ENCODE measurements at regions of chr19 and their contacts with region 1.

Region 1: GRCh38 chr19:41263850-41264580 is at the start of gene HNRNPUL1:
- DNase-seq: peak; percentile 99
- ATAC-seq: peak; percentile 70
- H3K4me3 Mint-ChIP-seq: peak within 1 kb of the TSS; percentile 95
- H3K27ac Mint-ChIP-seq: peak within 1 kb of the TSS; percentile 100
- H3K4me1 Mint-ChIP-seq: peaks cover 34% of the 10 kb centered on the region
- H3K27me3 Mint-ChIP-seq: no peaks in the 10 kb centered on the region
- total RNA-seq, gene HNRNPUL1: 263 to 312 TPM

Region 2: GRCh38 chr19:40444192-40445028 is 819.6 kb before region 1 on chr19 and contains the start of gene SERTAD3:
- CTCF ChIA-PET with region 1: no interaction called
- POLR2A ChIA-PET with region 1: no interaction called
- intact Hi-C with region 1: loop called in 1 of 2 experiments (anchors 5 kb)
- DNase-seq: peak; percentile 98
- ATAC-seq: peak; percentile 70
- H3K4me3 Mint-ChIP-seq: peak within 1 kb of the TSS; percentile 96
- H3K27ac Mint-ChIP-seq: peak within 1 kb of the TSS; percentile 96
- H3K4me1 Mint-ChIP-seq: peaks cover 16% of the 10 kb centered on the region
- H3K27me3 Mint-ChIP-seq: no peaks in the 10 kb centered on the region
- total RNA-seq, gene SERTAD3: 8.4 to 12.0 TPM

Region 3: GRCh38 chr19:40777937-40778705 is 485.9 kb before region 1 on chr19 and contains the start of gene RAB4B:
- CTCF ChIA-PET with region 1: interaction called, 9 read pairs
- POLR2A ChIA-PET with region 1: interaction called, 11 read pairs
- intact Hi-C with region 1: loop called in 1 of 2 experiments (anchors 1 kb)
- DNase-seq: peak; percentile 100
- ATAC-seq: peak; percentile 79
- H3K4me3 Mint-ChIP-seq: peak within 1 kb of the TSS; percentile 84
- H3K27ac Mint-ChIP-seq: peak within 1 kb of the TSS; percentile 94
- H3K4me1 Mint-ChIP-seq: peaks cover 38% of the 10 kb centered on the region
- H3K27me3 Mint-ChIP-seq: no peaks in the 10 kb centered on the region
- total RNA-seq, gene RAB4B: 26.4 to 33.7 TPM

Region 4: DNA sequence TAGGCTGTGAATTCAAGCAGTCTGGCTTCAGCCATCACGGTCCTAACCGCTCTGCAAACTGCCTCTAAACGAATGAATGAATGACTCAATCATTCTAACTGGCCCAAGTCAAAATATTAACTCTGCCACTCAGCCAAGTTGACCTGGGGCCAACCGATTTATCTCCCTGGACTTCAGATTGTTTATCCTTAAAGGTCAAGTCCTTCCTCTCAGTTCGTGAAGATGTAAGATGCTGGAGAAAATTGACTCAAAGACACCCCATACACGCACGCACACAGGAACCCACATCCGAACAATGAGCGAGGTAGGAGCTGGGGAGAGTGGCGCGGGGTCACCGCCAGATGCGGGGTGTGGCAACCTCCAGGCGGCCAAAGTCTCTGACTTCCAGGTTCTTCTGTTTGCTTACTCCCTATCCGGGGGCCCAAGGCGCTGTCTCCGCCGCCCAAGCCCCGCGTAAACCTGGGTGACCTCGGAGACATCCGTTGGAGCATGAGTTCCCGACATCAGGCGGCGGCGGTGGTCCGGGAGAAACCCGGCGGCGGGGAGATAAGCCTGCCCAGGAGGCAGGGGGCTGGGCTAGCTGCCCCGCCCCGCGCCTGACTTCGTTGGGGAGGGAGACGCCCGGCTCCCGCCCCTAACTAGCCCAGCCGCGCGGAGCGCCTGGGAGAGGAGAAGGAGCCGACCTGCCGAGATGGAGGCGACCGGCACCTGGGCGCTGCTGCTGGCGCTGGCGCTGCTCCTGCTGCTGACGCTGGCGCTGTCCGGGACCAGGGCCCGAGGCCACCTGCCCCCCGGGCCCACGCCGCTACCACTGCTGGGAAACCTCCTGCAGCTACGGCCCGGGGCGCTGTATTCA is 71.2 kb before region 1 on chr19 and contains the start of gene CYP2S1:
- CTCF ChIA-PET with region 1: no interaction called
- POLR2A ChIA-PET with region 1: no interaction called
- intact Hi-C with region 1: no loop called
- DNase-seq: peak; percentile 46
- ATAC-seq: peak; percentile 71
- H3K4me3 Mint-ChIP-seq: peak within 1 kb of the TSS; percentile 41
- H3K27ac Mint-ChIP-seq: peak within 1 kb of the TSS; percentile 29
- H3K4me1 Mint-ChIP-seq: peaks cover 12% of the 10 kb centered on the region
- H3K27me3 Mint-ChIP-seq: peaks cover 34% of the 10 kb centered on the region
- total RNA-seq, gene CYP2S1: 0.46 to 0.84 TPM

Region 5: DNA sequence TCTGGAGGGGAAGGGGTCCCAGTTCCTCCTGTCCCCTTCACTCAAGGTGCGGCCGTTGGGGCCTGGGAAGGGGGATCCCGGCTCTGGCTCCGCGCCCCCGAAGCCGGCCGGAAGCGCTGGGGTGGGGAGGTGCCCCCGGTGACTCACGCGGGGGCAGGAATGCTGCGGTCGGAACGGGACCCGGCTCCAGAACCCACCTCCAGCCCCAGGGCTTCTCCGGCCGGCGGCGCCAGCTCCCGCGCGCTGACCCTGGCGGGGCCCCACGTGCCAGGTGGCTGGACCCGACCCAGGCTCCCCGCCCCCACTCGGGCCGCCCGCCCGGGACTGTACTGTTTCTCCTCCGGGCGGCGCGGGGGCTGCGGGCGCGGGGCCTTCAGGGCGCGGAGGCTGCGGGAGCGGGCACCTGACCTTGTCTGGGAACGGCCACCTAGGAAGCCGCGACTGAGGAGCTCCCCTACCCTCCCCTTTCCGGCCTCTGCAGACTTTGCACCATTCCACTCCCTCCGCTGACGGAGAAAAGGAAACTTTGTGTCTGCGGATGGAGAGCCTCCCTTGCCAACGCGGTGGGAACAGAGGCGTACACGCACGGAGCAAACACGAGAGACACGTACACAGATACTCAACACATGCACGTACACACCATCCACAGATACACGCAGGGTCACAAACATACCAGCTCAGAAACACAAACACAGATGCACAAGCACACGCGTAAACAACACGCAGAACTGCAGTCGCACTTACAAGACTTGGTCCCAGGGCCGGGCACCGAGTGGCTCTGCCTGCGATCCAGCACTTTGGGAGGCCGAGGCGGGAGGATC is 37.8 kb before region 1 on chr19:
- CTCF ChIA-PET with region 1: interaction called, 6 read pairs
- POLR2A ChIA-PET with region 1: interaction called, 35 read pairs
- intact Hi-C with region 1: loop called (anchors 1 kb)
- DNase-seq: peak; percentile 70
- ATAC-seq: peak; percentile 45
- H3K4me3 Mint-ChIP-seq: peak overlapping the region; percentile 74
- H3K27ac Mint-ChIP-seq: peak overlapping the region; percentile 91
- H3K4me1 Mint-ChIP-seq: peaks cover 24% of the 10 kb centered on the region
- H3K27me3 Mint-ChIP-seq: peaks cover 6% of the 10 kb centered on the region

Region 6: GRCh38 chr19:41363753-41364523 is 99.9 kb after region 1 on chr19 and contains the start of gene B9D2:
- CTCF ChIA-PET with region 1: interaction called, 4 read pairs
- POLR2A ChIA-PET with region 1: interaction called, 20 read pairs
- intact Hi-C with region 1: loop called (anchors 1 kb)
- DNase-seq: peak; percentile 99
- ATAC-seq: peak; percentile 95
- H3K4me3 Mint-ChIP-seq: peak within 1 kb of the TSS; percentile 92
- H3K27ac Mint-ChIP-seq: peak within 1 kb of the TSS; percentile 98
- H3K4me1 Mint-ChIP-seq: peaks cover 29% of the 10 kb centered on the region
- H3K27me3 Mint-ChIP-seq: no peaks in the 10 kb centered on the region
- total RNA-seq, gene B9D2: 4.0 to 5.2 TPM

Region 7: DNA sequence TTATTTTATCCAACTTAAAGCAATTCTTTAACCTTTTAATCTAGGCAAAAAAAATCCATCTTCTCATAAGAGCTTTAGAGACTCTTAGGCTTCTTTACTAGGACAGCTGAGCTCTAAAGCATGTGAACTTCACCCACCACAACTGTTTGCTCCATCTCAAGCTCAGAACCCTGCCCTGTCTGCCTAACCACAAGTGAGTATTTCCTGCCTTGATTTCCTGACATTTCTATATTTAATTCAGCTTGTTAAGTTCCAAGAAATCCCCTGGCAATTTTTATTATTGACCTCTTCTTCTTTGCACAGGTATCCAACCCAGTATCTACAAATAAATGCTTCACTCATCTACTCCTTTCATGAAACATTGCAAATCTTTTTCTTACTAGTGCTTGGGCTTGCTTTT is 290.9 kb after region 1 on chr19:
- CTCF ChIA-PET with region 1: no interaction called
- POLR2A ChIA-PET with region 1: no interaction called
- intact Hi-C with region 1: loop called in 1 of 2 experiments (anchors 5 kb)
- DNase-seq: peak; percentile 43
- ATAC-seq: peak; percentile 37
- H3K4me3 Mint-ChIP-seq: peak overlapping the region; percentile 42
- H3K27ac Mint-ChIP-seq: peak overlapping the region; percentile 94
- H3K4me1 Mint-ChIP-seq: peaks cover 74% of the 10 kb centered on the region
- H3K27me3 Mint-ChIP-seq: no peaks in the 10 kb centered on the region

Region 8: GRCh38 chr19:41934849-41935374 is 670.9 kb after region 1 on chr19:
- CTCF ChIA-PET with region 1: no interaction called
- POLR2A ChIA-PET with region 1: no interaction called
- intact Hi-C with region 1: no loop called
- DNase-seq: peak; percentile 89
- ATAC-seq: peak; percentile 77
- H3K4me3 Mint-ChIP-seq: no peak overlapping the region
- H3K27ac Mint-ChIP-seq: peak overlapping the region; percentile 57
- H3K4me1 Mint-ChIP-seq: peaks cover 38% of the 10 kb centered on the region
- H3K27me3 Mint-ChIP-seq: peaks cover 2% of the 10 kb centered on the region